ENCODE measurements at regions of chr15 and their contacts with region 1.

Region 1: GRCh38 chr15:77633134-77633912 is 611 bp upstream of the LINGO1 start:
- DNase-seq: peak; percentile 74
- ATAC-seq: peak; percentile 89
- H3K4me3 ChIP-seq: peak overlapping the region; percentile 48 to 71
- H3K27ac ChIP-seq: peak overlapping the region; percentile 44; the same call in 1 of the 2 replicates
- H3K4me1 ChIP-seq: peaks cover 11 to 29% of the 10 kb centered on the region in 2 experiments; a peak in 3 of 4 replicates
- H3K27me3 ChIP-seq: no peaks in the 10 kb centered on the region
- CTCF ChIP-seq: peak; percentile 99 to 100 (median 100)
- POLR2A ChIP-seq: no peak
- RAD21 ChIP-seq: peak; percentile 92

Region 2: GRCh38 chr15:76898102-76898501 is 735.2 kb before region 1 on chr15:
- CTCF ChIA-PET with region 1: no interaction called
- POLR2A ChIA-PET with region 1: no interaction called
- RAD21 ChIA-PET with region 1: no interaction called
- intact Hi-C with region 1: no loop called
- DNase-seq: no peak
- ATAC-seq: no peak
- H3K4me3 ChIP-seq: no peak overlapping the region
- H3K27ac ChIP-seq: no peak overlapping the region
- H3K4me1 ChIP-seq: peaks cover 0 to 1% of the 10 kb centered on the region in 2 experiments; a peak in 1 of 4 replicates
- H3K27me3 ChIP-seq: no peaks in the 10 kb centered on the region
- CTCF ChIP-seq: no peak
- POLR2A ChIP-seq: no peak
- RAD21 ChIP-seq: no peak

Region 3: DNA sequence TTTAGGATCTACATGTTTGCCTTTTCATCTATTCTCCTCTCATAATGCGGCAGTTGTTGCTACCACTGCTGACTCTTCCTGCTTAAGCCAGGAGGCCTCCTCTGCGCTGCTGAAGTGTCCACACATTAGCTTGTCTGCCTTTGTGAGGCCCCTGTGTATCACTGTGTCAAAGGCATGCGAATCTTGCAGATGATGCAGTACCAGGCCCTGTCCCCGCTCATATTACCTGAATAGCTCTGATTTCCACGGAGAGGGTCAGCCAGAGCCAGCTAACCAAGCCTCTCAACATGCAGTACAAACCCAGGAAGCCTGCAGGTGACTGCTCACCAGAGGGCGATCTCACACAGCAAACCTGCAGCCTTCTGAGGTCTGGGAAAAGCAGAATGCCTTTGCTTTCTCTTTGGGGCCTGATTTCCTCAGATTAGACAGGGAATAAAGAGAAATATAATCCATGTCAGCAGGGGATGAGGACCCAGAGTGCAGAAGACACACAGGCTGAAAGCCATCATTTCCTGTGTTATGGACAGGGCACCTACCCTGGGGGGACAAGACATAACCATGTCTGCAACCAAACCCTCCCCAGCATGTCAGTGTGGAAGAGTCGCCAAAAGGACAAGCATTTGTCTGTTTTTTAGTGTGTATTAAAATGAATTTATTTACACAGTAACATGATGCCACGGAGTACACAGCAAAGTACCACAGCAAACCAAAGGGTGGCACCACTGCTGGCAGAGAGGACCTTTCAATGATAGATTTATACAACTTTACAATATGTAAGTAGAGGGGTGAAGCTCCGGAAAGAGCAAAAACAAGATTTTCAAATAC is 525.6 kb before region 1 on chr15:
- CTCF ChIA-PET with region 1: interaction called, 11 read pairs
- POLR2A ChIA-PET with region 1: no interaction called
- RAD21 ChIA-PET with region 1: no interaction called
- intact Hi-C with region 1: no loop called
- DNase-seq: no peak
- ATAC-seq: peak; percentile 95
- H3K4me3 ChIP-seq: no peak overlapping the region
- H3K27ac ChIP-seq: no peak overlapping the region
- H3K4me1 ChIP-seq: no peaks in the 10 kb centered on the region; a peak in 1 of 4 replicates
- H3K27me3 ChIP-seq: no peaks in the 10 kb centered on the region
- CTCF ChIP-seq: peak; percentile 66 to 80 (median 75); a peak in 5 of 6 replicates
- POLR2A ChIP-seq: no peak
- RAD21 ChIP-seq: peak; percentile 77

Region 4: DNA sequence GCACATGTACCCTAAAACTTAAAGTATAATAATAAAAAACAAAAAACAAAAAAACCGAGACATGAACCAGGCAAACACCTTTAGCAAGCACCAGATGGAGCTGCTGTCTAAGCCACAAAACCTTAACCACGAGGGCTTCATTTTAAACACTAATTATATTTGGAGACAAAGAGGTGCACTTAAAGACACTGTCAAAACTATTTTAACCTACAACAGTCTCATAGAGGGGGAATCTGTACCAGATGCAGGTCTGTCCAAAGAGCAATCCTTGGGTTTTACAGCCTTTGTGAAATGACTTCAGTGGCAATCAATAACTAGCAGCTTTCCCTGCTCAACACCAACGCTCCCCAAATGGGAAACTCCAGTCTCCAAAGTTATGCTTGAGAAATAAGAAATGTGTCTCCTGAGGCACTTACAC is 446.7 kb before region 1 on chr15:
- CTCF ChIA-PET with region 1: interaction called, 13 read pairs
- POLR2A ChIA-PET with region 1: no interaction called
- RAD21 ChIA-PET with region 1: no interaction called
- intact Hi-C with region 1: loop called (anchors 5 kb)
- DNase-seq: peak; percentile 10
- ATAC-seq: 0 out of 2 replicates have a peak, but pooled peaks have one; percentile 30
- H3K4me3 ChIP-seq: no peak overlapping the region
- H3K27ac ChIP-seq: no peak overlapping the region
- H3K4me1 ChIP-seq: no peaks in the 10 kb centered on the region
- H3K27me3 ChIP-seq: no peaks in the 10 kb centered on the region
- CTCF ChIP-seq: peak; percentile 44 to 64 (median 47); a peak in 4 of 6 replicates
- POLR2A ChIP-seq: no peak
- RAD21 ChIP-seq: peak; percentile 75

Region 5: GRCh38 chr15:77607111-77607893 is 26.0 kb before region 1 on chr15:
- CTCF ChIA-PET with region 1: interaction called, 10 read pairs
- POLR2A ChIA-PET with region 1: no interaction called
- RAD21 ChIA-PET with region 1: no interaction called
- intact Hi-C with region 1: no loop called
- DNase-seq: no peak
- ATAC-seq: peak; percentile 26; the same call in 1 of the 2 replicates
- H3K4me3 ChIP-seq: no peak overlapping the region
- H3K27ac ChIP-seq: no peak overlapping the region
- H3K4me1 ChIP-seq: peaks cover 5 to 52% of the 10 kb centered on the region in 2 experiments; a peak in 3 of 4 replicates
- H3K27me3 ChIP-seq: no peaks in the 10 kb centered on the region
- CTCF ChIP-seq: no peak
- POLR2A ChIP-seq: no peak
- RAD21 ChIP-seq: no peak

Region 6: DNA sequence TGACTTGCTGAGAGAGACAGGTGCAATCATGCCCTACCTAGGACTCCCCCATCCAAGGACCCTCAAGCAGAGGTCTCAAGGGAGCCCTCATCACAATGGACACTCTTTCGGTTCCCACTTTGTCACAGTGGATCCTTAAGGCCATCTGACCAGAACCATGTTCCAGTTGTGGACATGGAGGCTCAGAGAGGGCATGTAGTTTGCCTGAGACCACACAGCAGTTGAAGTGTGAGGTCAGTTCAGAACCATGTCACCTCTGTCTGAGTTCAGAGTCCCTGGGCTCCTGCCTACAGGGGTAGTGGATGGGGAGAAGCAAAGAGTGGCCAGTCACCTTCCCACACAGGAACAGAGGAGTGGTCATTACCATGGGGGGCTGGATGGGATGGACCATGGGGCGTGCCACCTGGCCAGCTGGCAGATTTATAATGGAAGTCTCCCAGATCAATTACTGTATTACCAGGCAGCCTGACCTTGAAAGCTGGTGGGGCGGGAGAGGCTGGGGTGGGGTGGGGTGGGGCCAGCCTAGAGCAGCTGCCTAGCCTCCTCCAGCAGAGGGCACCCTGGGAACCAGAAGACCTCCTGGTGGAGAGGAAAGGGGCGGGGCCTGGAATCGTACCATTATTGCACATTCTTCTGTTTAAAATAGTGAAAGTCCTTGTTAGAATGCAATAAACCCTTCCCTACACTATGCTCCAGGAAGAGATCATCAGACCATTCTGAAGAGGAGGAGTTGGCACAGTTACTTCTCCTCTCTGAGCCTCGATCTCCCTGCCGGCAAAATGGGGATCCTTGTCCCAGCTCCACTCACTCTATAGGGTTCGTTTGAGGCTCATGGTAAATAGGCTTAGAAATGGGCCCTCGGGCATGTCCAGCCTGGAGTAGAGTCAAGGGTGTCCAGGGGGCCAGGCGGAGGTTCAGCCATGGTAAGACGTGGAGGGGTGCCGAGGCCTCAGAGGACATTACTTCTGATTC is 26.3 kb after region 1 on chr15:
- CTCF ChIA-PET with region 1: interaction called, 10 read pairs
- POLR2A ChIA-PET with region 1: interaction called, 3 read pairs
- RAD21 ChIA-PET with region 1: no interaction called
- intact Hi-C with region 1: no loop called
- DNase-seq: peak; percentile 34
- ATAC-seq: peak; percentile 89
- H3K4me3 ChIP-seq: no peak overlapping the region
- H3K27ac ChIP-seq: no peak overlapping the region
- H3K4me1 ChIP-seq: peaks cover 2 to 10% of the 10 kb centered on the region in 2 experiments; a peak in 3 of 4 replicates
- H3K27me3 ChIP-seq: no peaks in the 10 kb centered on the region
- CTCF ChIP-seq: peak; percentile 46 to 61 (median 56); a peak in 5 of 6 replicates
- POLR2A ChIP-seq: no peak
- RAD21 ChIP-seq: peak; percentile 50

Region 7: GRCh38 chr15:77870195-77871065 is 237.1 kb after region 1 on chr15:
- CTCF ChIA-PET with region 1: interaction called, 10 read pairs
- POLR2A ChIA-PET with region 1: no interaction called
- RAD21 ChIA-PET with region 1: interaction called in 1 of 2 experiments, 3 read pairs
- intact Hi-C with region 1: loop called (anchors 1 kb)
- DNase-seq: peak; percentile 59
- ATAC-seq: peak; percentile 86
- H3K4me3 ChIP-seq: no peak overlapping the region
- H3K27ac ChIP-seq: no peak overlapping the region
- H3K4me1 ChIP-seq: peaks cover 0 to 7% of the 10 kb centered on the region in 2 experiments; a peak in 1 of 4 replicates
- H3K27me3 ChIP-seq: no peaks in the 10 kb centered on the region
- CTCF ChIP-seq: peak; percentile 42 to 70 (median 70); a peak in 5 of 6 replicates
- POLR2A ChIP-seq: no peak
- RAD21 ChIP-seq: peak; percentile 47

Measured in HCT116 (cell line).